ENCODE measurements at regions of chr12 and their contacts with region 1.

Region 1: DNA sequence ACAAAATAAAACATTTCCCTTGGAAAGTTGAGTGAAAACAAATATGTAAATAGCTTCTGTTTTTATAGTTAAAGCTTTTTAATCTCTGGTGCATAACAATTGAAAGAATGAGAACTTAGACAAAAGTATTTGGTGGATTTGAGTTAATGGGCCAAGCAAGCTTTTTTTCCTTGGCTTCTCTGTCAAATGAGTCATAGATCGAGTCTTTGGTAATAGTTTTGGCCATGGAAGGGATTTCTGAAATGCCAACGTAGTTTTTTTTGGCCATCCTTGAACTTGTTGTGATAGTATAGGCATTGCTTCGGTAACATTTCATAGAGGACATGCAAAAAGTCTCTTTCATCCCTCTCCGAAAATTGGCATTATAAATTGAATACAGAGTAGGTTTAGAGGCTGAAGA is 34.9 kb downstream of the GPR19 start:
- DNase-seq: no peak
- CTCF ChIP-seq: no peak

Region 2: DNA sequence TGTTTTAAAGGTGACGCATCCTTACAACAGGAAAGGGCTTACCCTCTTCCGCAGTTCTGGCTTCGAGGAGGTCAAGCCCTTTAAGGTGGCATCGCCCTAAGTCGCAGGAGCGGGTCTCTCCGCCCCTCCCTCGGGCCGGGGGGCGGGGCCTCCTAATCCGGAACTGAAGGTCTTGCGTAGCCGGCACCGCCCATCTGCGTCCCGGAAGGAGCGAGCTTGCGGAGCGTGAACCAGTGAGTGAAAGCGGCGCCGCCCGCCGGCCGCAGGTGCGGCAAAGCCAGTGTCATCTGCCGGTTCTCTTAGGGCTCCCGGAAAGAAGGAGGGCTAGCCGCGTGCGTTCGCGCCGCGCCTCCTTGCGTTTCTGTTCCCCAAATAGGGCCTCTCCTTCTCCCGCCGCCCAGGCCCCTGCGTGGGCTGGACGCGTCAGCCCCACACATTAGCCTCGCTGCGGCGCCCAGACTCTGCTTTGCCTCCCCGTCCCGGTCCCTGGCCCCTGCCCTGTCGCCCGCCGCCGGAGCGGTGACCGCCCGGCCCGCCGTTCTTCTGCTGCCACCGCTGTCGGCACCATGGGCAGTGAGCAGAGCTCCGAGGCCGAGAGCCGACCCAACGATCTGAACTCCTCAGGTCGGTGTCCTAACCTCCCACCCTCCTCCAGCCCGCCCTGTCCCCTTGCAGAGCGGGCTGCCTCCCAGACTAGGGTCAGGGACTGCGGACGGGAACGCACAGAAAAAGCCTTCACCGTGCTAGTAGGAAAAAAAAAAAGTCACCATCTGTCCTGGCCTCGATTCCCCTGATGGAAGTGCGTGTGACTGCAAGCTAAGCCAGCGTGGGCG is 304.0 kb before region 1 on chr12 and contains the start of gene BORCS5:
- CTCF ChIA-PET with region 1: interaction called, 10 read pairs
- POLR2A ChIA-PET with region 1: no interaction called
- DNase-seq: peak; percentile 96
- CTCF ChIP-seq: peak; percentile 29

Region 3: DNA sequence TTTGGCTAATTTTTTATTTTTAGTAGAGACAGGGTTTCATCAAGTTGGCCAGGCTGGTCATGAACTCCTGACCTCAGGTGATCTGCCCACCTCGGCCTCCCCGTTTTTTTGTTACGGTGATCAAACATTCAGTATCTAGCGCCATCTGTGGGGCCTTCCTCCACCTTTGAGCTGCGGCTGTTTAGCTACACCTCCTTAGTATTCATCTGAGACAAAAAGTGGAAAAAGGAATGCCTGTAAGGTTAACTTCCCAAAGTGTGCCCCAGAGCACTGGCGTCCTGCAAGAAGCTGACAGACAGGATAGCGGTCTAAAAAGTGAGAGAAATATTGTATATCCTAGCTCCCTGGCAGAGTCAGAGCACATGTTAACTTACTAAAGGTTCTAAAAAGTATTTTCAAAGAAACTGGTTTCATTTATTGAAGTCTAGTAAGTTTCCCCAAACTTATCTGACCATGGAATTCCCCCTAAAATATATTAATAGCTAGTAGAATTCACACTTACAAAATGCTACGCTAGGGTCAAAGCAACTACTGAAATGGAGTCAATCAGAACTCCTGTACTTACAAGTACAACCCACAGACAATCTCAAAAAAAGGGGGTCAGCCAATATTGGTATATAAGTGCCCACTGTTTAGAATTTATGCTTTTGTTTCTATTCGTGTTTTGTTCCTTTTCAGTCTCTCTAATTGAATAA is 157.6 kb before region 1 on chr12:
- CTCF ChIA-PET with region 1: no interaction called
- POLR2A ChIA-PET with region 1: no interaction called
- DNase-seq: peak; percentile 24
- CTCF ChIP-seq: peak; percentile 12

Measured in GM10248 (cell line).